AG04450 (cell line): ENCODE measurements at regions of chr18 and their contacts with region 1.

Region 1: GRCh38 chr18:11502368-11502767 is 107.0 kb upstream of the SLC35G4 start:
- DNase-seq: peak; percentile 20
- H3K4me3 ChIP-seq: no peak overlapping the region
- H3K27ac ChIP-seq: no peak overlapping the region
- H3K27me3 ChIP-seq: no peaks in the 10 kb centered on the region
- CTCF ChIP-seq: no peak

Region 2: GRCh38 chr18:11125492-11126315 is 376.7 kb before region 1 on chr18:
- CTCF ChIA-PET with region 1: no interaction called
- POLR2A ChIA-PET with region 1: no interaction called
- DNase-seq: no peak
- H3K4me3 ChIP-seq: no peak overlapping the region
- H3K27ac ChIP-seq: no peak overlapping the region
- H3K27me3 ChIP-seq: peaks cover 3% of the 10 kb centered on the region
- CTCF ChIP-seq: no peak

Region 3: GRCh38 chr18:11454021-11454420 is 48.3 kb before region 1 on chr18:
- CTCF ChIA-PET with region 1: no interaction called
- POLR2A ChIA-PET with region 1: no interaction called
- DNase-seq: no peak
- H3K4me3 ChIP-seq: no peak overlapping the region
- H3K27ac ChIP-seq: no peak overlapping the region
- H3K27me3 ChIP-seq: no peaks in the 10 kb centered on the region
- CTCF ChIP-seq: no peak

Region 4: DNA sequence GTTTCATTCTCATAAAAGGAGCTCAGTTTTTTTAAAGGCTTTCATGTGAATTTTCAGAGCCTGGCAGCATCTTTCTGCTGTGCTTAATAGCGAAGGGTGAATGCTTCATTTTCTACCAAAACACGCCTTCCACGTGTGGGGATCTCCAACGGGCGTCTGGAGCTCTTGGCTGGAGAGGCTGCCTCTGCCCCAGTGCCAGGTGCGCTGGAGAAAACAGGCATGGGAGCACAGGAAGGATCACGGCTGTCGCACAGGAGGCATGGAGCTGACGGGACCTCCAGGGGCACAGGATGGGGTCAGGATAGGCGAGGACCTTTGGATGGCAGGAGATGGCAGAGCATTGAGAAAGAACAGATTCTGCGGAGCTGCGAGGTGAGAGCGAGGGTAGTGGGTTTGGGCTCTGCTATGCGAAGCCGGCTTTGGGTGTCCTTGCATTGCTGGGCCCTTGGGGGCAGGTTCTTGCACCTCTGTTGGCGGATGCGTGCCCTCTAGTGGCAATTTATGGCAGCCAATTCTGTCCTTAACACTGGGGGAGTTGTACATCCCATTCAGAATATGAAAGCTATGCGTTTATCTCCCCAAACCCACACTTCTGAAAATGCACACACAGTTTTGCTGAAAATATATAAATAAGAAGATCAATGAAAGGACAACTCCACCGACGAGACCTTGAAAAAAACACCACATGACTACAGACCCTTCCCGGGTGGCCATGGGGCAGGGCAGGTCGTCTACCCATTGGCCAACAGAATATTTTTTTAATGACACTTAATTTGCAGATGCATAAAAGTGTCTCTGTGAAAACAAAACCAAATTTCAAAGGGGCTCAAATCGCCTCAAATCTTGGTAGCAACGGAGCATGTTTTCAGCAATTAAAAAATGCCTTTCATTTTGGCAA is 16.7 kb after region 1 on chr18:
- CTCF ChIA-PET with region 1: interaction called, 11 read pairs
- POLR2A ChIA-PET with region 1: no interaction called
- DNase-seq: peak; percentile 20
- H3K4me3 ChIP-seq: no peak overlapping the region
- H3K27ac ChIP-seq: no peak overlapping the region
- H3K27me3 ChIP-seq: no peaks in the 10 kb centered on the region
- CTCF ChIP-seq: peak; percentile 73